Activated T-helper 2 cell treated with anti-CD3 and anti-CD28 coated beads, Interferon-gamma antibody, Interleukin-2, Interleukin-4, amounts not matched to agents 10 μg/mL and 5 μg/mL and 100 μg/mL, durations not matched to agents 14 hours and 24 hours and 36 hours (primary cell): ENCODE measurements at regions of chr10 and their contacts with region 1.

Region 1: GRCh38 chr10:129039406-129040370 is 427.4 kb upstream of the MGMT start:
- DNase-seq: no peak
- H3K4me3 Mint-ChIP-seq: no peak overlapping the region
- H3K27ac Mint-ChIP-seq: no peak overlapping the region
- H3K4me1 Mint-ChIP-seq: peaks cover 36% of the 10 kb centered on the region
- H3K27me3 Mint-ChIP-seq: peaks cover 30% of the 10 kb centered on the region

Region 2: GRCh38 chr10:129057856-129058663 is 18.4 kb after region 1 on chr10:
- intact Hi-C with region 1: loop called (anchors 2 kb)
- DNase-seq: peak; percentile 64
- H3K4me3 Mint-ChIP-seq: peak overlapping the region; percentile 43
- H3K27ac Mint-ChIP-seq: no peak overlapping the region
- H3K4me1 Mint-ChIP-seq: peaks cover 35% of the 10 kb centered on the region
- H3K27me3 Mint-ChIP-seq: peaks cover 5% of the 10 kb centered on the region